GM18951 (cell line): ENCODE measurements at regions of chr9 and their contacts with region 1.

Region 1: GRCh38 chr9:85142968-85143367 is 473.4 kb downstream of the NTRK2 start:
- POLR2A ChIP-seq: no peak

Region 2: DNA sequence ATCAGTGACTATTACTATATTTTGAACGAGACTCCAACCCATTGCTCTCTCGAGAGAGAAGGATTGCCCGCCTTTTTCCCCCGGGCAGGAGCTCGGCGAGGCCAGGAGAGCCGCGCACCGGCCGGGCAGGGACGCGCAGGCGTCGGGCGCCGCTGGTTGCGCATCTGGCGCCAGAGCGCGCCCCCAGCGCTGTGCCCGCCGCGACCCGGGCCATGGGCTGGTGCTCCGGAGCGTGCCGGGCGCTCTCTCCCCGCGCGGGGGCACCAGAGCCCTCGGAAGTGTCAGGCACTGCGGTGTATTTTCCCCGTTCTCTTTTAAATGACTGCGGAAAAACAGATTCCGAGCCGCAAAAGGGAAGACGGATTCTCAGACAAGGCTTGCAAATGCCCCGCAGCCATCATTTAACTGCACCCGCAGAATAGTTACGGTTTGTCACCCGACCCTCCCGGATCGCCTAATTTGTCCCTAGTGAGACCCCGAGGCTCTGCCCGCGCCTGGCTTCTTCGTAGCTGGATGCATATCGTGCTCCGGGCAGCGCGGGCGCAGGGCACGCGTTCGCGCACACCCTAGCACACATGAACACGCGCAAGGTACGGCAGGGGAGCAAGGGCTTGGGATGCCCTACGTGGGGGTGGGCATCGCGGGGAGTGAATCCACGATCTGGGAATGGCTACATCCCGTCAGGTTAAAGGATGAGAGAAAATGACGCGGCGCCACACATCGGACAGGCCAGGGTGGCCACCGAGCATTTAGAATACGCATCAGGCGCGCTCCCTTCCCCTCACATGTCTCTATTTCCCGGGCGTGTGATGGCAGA is 474.6 kb before region 1 on chr9:
- in situ Hi-C with region 1: loop called (anchors 25 kb)
- POLR2A ChIP-seq: no peak

Region 3: GRCh38 chr9:85547599-85547998 is 404.6 kb after region 1 on chr9:
- in situ Hi-C with region 1: no loop called
- POLR2A ChIP-seq: no peak